Activated CD4-positive, alpha-beta memory T cell treated with anti-CD3 and anti-CD28 coated beads for 36 hours (primary cell): ENCODE measurements at regions of chr6 and their contacts with region 1.

Region 1: DNA sequence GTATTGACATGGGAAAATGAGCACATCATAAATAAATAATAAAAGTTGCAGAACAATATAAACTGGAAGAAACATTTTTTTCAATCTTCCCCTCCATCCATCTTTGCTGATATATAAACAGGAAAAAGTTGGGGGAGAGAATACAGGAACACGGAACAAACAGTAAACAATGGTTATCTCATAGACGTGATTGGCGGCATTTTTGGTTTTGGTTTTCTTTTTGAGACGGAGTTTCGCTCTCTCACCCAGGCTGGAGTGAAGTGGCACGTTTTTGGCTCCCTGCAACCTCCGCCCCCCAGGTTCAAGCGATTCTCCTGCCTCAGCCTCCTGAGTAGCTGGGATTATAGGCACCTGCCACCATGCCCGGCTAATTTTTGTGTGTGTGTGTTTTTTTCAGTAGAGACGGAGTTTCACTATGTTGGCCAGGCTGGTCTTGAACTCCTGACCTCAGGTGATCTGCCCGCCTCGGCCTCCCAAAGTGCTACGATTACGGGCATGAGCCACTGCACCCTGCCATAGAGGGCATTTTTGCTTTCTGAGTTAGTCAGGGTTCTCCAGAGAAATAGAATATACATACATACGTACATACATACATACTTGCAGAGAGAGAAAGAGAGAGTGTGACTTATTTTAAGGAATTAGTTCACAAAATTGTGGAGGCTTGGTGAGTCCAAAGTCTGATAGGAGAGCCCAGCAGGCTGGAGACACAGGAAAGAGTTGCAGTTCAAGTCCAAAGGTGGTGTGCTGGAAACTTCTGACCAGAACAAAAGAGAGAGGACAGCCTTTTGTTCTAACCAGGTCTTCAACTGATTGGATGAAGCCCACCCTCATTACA is 22.6 kb downstream of the GNL1 start:
- DNase-seq: peak; percentile 48
- H3K4me3 Mint-ChIP-seq: peak overlapping the region; percentile 78
- H3K27ac Mint-ChIP-seq: peak overlapping the region; percentile 91
- H3K4me1 Mint-ChIP-seq: peaks cover 52% of the 10 kb centered on the region
- H3K27me3 Mint-ChIP-seq: no peaks in the 10 kb centered on the region

Region 2: DNA sequence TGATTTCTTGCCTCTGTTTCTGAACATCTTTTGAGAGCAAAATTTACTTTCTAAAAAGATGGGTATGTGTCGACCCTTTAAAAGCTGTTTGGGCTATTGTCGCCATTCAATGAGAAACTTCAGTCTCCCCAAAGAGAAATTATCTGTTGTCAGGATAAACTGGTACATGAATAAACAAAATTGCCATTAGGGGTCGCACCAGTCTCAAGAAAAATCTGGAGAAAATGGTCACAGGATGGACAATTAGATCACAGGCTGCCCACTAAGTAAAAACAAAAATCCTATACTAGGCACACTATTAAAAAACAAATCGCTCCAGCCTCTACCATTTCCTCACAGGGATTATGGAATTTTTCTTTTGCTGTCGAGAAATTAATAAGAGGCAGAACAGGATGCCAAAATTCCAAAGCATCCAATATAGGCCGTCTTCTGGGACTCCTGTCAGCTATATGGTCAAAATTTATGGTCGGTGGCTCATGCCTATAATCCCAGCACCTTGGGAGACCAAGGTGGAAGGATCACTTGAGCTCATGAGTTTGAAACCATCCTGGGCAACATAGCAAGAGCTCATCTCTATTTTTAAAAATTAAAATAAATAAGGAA is 49.9 kb before region 1 on chr6:
- CTCF ChIA-PET with region 1: interaction called, 446 read pairs
- POLR2A ChIA-PET with region 1: interaction called, 4 read pairs
- intact Hi-C with region 1: loop called (anchors 1 kb)
- DNase-seq: no peak
- H3K4me3 Mint-ChIP-seq: no peak overlapping the region
- H3K27ac Mint-ChIP-seq: no peak overlapping the region
- H3K4me1 Mint-ChIP-seq: peaks cover 34% of the 10 kb centered on the region
- H3K27me3 Mint-ChIP-seq: peaks cover 29% of the 10 kb centered on the region

Region 3: GRCh38 chr6:30489081-30490025 is 44.3 kb before region 1 on chr6 and contains the start of gene HLA-E:
- CTCF ChIA-PET with region 1: interaction called, 446 read pairs
- POLR2A ChIA-PET with region 1: interaction called, 50 read pairs
- intact Hi-C with region 1: loop called (anchors 1 kb)
- DNase-seq: peak; percentile 93
- H3K4me3 Mint-ChIP-seq: peak within 1 kb of the TSS; percentile 99
- H3K27ac Mint-ChIP-seq: peak within 1 kb of the TSS; percentile 99
- H3K4me1 Mint-ChIP-seq: peaks cover 41% of the 10 kb centered on the region
- H3K27me3 Mint-ChIP-seq: peaks cover 2% of the 10 kb centered on the region
- total RNA-seq, gene HLA-E: 481 to 485 TPM

Region 4: GRCh38 chr6:30500421-30501355 is 33.0 kb before region 1 on chr6:
- CTCF ChIA-PET with region 1: interaction called, 35 read pairs
- POLR2A ChIA-PET with region 1: interaction called, 7 read pairs
- intact Hi-C with region 1: loop called (anchors 1 kb)
- DNase-seq: no peak
- H3K4me3 Mint-ChIP-seq: peak overlapping the region; percentile 64
- H3K27ac Mint-ChIP-seq: peak overlapping the region; percentile 58
- H3K4me1 Mint-ChIP-seq: peaks cover 43% of the 10 kb centered on the region
- H3K27me3 Mint-ChIP-seq: no peaks in the 10 kb centered on the region

Region 5: DNA sequence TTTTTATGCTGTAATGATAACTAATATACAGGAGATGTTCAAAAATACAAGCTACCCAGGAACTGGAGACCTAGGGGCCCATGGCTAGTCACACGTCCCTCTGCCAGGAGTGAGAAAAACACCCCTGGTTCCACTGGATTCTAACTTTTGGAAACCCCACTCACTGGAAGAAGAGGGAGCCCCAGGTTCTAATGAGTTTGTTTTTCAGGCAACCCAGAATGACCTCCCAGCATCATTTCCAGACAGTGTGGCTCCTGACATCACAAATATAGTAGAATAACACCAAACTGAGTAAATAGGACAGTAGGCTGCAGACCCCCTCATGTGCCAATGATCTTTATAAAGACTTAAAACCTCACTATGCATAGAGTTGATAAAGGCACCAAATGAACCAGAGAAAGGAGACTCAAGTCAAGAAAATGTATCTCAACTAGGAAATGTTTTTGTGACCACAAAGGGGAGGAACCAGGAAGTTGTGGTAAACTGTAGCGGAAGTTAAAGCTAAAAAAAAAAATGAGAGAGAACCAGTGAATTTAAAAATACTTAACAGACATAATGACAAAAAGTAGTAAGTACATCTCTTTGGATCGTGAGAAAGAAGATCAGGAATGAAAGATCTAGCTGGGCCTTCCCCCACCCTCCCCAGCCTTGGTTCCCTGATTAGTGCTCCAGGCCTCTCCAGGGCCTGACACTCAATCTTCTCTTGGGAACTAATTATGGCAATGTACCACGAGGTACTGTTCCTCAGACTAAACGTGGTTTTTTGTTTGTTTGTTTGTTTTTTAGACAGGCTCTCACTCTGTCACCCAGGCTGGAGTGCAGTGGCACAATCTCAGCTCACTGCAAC is 24.6 kb before region 1 on chr6:
- CTCF ChIA-PET with region 1: interaction called, 34 read pairs
- POLR2A ChIA-PET with region 1: interaction called, 11 read pairs
- intact Hi-C with region 1: loop called (anchors 2 kb)
- DNase-seq: peak; percentile 46
- H3K4me3 Mint-ChIP-seq: peak overlapping the region; percentile 31
- H3K27ac Mint-ChIP-seq: peak overlapping the region; percentile 86
- H3K4me1 Mint-ChIP-seq: peaks cover 55% of the 10 kb centered on the region
- H3K27me3 Mint-ChIP-seq: no peaks in the 10 kb centered on the region

Region 6: DNA sequence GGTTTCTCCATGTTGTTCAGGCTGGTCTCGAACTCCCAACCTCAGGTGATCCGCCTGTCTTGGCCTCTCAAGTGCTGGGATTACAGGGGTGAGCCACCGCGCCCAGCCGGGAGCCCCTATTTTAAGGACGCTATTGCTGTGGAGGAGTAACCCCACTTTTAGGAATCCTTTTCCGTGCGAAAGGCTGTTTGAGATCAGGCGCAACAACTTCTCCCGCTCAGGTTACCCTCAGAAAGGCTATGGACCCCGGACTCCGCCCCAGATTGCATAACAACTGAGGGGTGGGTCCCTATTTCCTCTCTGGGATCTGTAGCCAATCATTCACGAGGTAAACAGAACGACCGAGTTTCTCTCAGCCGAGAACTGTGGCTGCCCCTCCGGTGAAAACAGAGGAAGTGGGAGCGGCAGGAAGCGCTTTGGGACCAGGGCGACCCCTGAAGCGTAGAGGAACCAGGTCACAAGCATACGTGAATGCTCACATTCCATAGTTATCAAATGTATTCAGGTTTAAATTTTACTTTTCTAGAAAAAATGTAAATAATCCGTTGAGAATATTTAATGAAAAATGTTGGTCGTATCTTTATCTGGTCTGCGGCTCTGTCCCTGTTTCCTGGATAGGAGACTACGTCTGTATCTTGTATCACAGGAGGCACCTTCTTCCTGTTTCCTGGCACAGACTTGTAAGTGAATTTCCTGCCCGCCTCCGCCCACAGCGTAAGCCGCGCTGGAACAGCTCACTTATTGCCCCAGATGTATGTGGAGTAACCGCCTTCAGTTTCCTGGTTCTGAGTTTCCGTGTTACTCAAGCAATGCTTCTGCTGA is 17.5 kb before region 1 on chr6:
- CTCF ChIA-PET with region 1: interaction called, 34 read pairs
- POLR2A ChIA-PET with region 1: interaction called, 21 read pairs
- intact Hi-C with region 1: loop called (anchors 1 kb)
- DNase-seq: peak; percentile 97
- H3K4me3 Mint-ChIP-seq: peak overlapping the region; percentile 78
- H3K27ac Mint-ChIP-seq: peak overlapping the region; percentile 98
- H3K4me1 Mint-ChIP-seq: peaks cover 59% of the 10 kb centered on the region
- H3K27me3 Mint-ChIP-seq: no peaks in the 10 kb centered on the region

Region 7: GRCh38 chr6:30814136-30815040 is 280.7 kb after region 1 on chr6:
- CTCF ChIA-PET with region 1: no interaction called
- POLR2A ChIA-PET with region 1: no interaction called
- intact Hi-C with region 1: loop called (anchors 5 kb)
- DNase-seq: peak; percentile 78
- H3K4me3 Mint-ChIP-seq: peak overlapping the region; percentile 22
- H3K27ac Mint-ChIP-seq: peak overlapping the region; percentile 91
- H3K4me1 Mint-ChIP-seq: peaks cover 94% of the 10 kb centered on the region
- H3K27me3 Mint-ChIP-seq: no peaks in the 10 kb centered on the region